ENCODE measurements at regions of chr21 and their contacts with region 1.

Region 1: DNA sequence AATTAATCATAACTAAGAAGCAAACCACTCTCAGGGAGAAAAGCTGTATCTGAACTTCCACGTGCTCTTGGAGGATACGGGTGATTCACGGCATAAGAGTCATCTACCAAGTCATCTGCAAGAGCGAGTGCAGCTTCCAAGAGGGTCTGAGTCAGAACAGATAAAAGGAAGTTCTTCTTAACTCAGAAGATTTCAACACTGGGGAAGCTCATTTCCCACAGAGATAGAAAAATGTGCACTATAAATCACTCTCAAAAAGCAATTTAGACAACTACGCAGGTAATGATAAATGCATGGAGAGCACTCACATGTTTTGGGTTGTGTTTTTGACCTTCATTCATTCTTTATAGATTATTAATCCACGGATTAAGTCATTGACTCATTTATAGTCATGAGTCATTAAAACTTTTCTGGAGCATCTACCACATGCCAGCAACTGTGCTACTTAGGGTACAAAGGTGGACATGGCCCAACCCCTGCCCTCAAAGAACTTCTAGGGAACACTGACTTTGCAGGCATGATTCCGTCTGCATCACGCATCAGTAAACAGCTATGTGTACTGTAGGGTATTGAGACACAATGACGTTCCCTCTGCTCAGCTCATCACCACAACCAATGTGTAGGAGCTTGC is 20.8 kb downstream of the KCNJ15 start:
- DNase-seq: peak; percentile 63 to 96
- ATAC-seq: peak; percentile 97 to 98
- H3K4me3 ChIP-seq: no peak overlapping the region
- H3K27ac ChIP-seq: peak overlapping the region; percentile 90 to 92
- H3K4me1 ChIP-seq: peaks cover 26% of the 10 kb centered on the region
- CTCF ChIP-seq: no peak
- EP300 ChIP-seq: peak; percentile 94 to 97
- POLR2A ChIP-seq: no peak
- RAD21 ChIP-seq: peak in 1 of 2 experiments; percentile 75; a peak in 4 of 5 replicates

Region 2: GRCh38 chr21:38140210-38140907 is 137.3 kb before region 1 on chr21:
- CTCF ChIA-PET with region 1: no interaction called
- POLR2A ChIA-PET with region 1: interaction called, 13 read pairs
- DNase-seq: peak; percentile 17 to 92
- ATAC-seq: peak; percentile 88 to 92
- H3K4me3 ChIP-seq: no peak overlapping the region
- H3K27ac ChIP-seq: peak overlapping the region; percentile 93 to 99
- H3K4me1 ChIP-seq: peaks cover 56% of the 10 kb centered on the region
- CTCF ChIP-seq: no peak
- EP300 ChIP-seq: no peak; a peak in 1 of 5 replicates
- POLR2A ChIP-seq: no peak
- RAD21 ChIP-seq: no peak

Region 3: GRCh38 chr21:38289705-38290485 is 12.3 kb after region 1 on chr21:
- CTCF ChIA-PET with region 1: no interaction called
- POLR2A ChIA-PET with region 1: no interaction called
- DNase-seq: no peak
- ATAC-seq: no peak
- H3K4me3 ChIP-seq: no peak overlapping the region
- H3K27ac ChIP-seq: peak overlapping the region in 1 of 2 experiments; percentile 46; a peak in 1 of 6 replicates
- H3K4me1 ChIP-seq: peaks cover 38% of the 10 kb centered on the region
- CTCF ChIP-seq: no peak
- EP300 ChIP-seq: no peak
- POLR2A ChIP-seq: no peak
- RAD21 ChIP-seq: no peak

Region 4: DNA sequence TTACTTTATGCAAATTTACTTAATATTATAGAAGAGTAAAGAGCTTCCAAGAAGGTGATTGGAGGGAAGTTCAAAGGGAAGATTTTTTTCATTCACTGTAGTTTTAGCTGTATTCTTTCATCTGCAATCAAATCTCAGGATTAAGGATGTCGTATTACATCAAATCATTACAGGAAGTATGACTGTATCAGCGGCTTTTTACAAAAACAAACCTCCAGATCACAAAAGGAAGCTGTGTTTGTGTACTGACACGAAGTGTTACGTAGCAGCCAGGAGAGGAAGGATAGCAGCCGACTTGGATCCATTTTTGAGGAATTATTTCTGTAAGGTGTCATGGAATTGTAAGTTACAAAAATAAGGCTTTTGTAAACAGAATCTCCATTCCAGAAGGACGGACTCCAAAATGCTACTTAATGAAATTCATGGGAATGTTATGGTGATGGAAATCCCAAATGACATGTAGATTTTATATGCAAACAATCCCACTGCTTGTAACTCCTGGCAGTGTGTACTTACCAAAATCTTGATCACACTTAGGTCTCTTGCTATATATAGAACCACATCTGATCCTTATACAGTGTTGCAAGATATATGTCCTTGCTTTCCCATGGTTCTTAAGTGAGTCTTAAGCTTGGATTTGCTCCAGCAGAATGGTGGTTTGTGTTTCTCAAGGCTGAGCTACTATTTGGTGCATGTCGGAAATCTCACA is 29.0 kb after region 1 on chr21:
- CTCF ChIA-PET with region 1: interaction called, 3 read pairs
- POLR2A ChIA-PET with region 1: interaction called, 13 read pairs
- DNase-seq: peak in 1 of 2 experiments; percentile 41
- ATAC-seq: peak; percentile 19 to 50; a peak in 4 of 6 replicates
- H3K4me3 ChIP-seq: no peak overlapping the region
- H3K27ac ChIP-seq: peak overlapping the region; percentile 72 to 74
- H3K4me1 ChIP-seq: peaks cover 59% of the 10 kb centered on the region
- CTCF ChIP-seq: no peak
- EP300 ChIP-seq: peak; percentile 30 to 31; a peak in 2 of 5 replicates
- POLR2A ChIP-seq: no peak
- RAD21 ChIP-seq: no peak

Region 5: GRCh38 chr21:38343693-38344092 is 66.1 kb after region 1 on chr21:
- CTCF ChIA-PET with region 1: no interaction called
- POLR2A ChIA-PET with region 1: interaction called, 12 read pairs
- DNase-seq: peak; percentile 58 to 84
- ATAC-seq: peak; percentile 95
- H3K4me3 ChIP-seq: no peak overlapping the region
- H3K27ac ChIP-seq: peak overlapping the region; percentile 86 to 95
- H3K4me1 ChIP-seq: peaks cover 32% of the 10 kb centered on the region
- CTCF ChIP-seq: no peak
- EP300 ChIP-seq: peak; percentile 70 to 75; a peak in 4 of 5 replicates
- POLR2A ChIP-seq: no peak
- RAD21 ChIP-seq: peak; percentile 15 to 47; a peak in 2 of 5 replicates

Measured in A549 (cell line).